ENCODE measurements at regions of chr14 and their contacts with region 1.

Region 1: DNA sequence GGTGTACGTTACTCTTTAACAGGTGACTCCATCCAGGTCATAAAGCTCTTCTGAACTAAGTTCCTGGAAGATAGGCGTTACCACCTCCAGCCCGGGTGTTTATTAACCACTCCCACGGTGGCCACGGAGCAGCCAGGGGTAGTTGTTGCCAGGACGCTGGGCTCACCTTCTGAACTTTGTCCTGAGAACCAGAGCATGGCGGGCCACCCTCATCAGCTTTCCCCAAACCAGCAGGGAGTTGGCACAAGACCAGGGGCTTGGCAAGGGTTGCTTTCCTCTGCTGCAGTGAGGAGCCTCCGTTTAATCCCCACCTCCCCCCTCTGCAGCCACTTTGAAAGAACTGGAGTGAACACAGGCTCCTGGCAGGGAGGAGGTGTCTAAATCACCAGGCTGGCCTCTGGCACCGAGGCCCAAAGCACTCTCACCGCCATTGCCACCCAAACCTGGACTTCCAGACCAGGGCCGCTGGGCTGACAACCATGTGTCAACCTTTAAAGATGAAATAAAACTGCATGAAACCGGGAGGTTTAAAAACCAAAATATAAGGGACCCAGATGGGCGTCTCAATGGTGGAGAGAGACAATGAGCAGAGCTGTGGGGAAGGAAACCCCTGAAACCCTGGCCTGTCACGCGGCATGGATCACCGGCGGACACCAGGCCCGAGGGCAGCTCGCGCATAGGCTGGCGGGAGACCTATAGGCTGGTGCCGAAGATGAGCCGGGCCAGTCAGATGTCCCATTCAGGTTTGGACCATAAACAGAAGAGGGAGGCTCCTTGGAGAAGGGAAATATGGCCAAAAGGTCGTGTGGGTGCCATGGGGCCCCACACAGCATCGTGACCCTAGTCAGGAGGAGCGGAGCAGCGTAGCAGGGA is 30.9 kb upstream of the TDRD9 start:
- DNase-seq: no peak
- ATAC-seq: no peak
- H3K4me3 ChIP-seq: no peak overlapping the region
- H3K27ac ChIP-seq: peak overlapping the region; percentile 14 to 15; a peak in 1 of 6 replicates
- H3K4me1 ChIP-seq: peaks cover 12% of the 10 kb centered on the region; the same call in 1 of the 3 replicates
- CTCF ChIP-seq: no peak
- EP300 ChIP-seq: no peak
- POLR2A ChIP-seq: no peak
- RAD21 ChIP-seq: no peak

Region 2: GRCh38 chr14:103801459-103801858 is 95.9 kb before region 1 on chr14:
- CTCF ChIA-PET with region 1: interaction called, 15 read pairs
- POLR2A ChIA-PET with region 1: no interaction called
- DNase-seq: no peak
- ATAC-seq: no peak
- H3K4me3 ChIP-seq: no peak overlapping the region
- H3K27ac ChIP-seq: no peak overlapping the region
- H3K4me1 ChIP-seq: no peaks in the 10 kb centered on the region
- CTCF ChIP-seq: no peak
- EP300 ChIP-seq: no peak
- POLR2A ChIP-seq: no peak
- RAD21 ChIP-seq: no peak

Region 3: GRCh38 chr14:103880348-103881267 is 16.7 kb before region 1 on chr14:
- CTCF ChIA-PET with region 1: interaction called, 122 read pairs
- POLR2A ChIA-PET with region 1: no interaction called
- DNase-seq: peak in 1 of 2 experiments; percentile 54
- ATAC-seq: peak; percentile 60 to 69
- H3K4me3 ChIP-seq: peak overlapping the region; percentile 35
- H3K27ac ChIP-seq: peak overlapping the region; percentile 86 to 94
- H3K4me1 ChIP-seq: peaks cover 21% of the 10 kb centered on the region
- CTCF ChIP-seq: no peak
- EP300 ChIP-seq: no peak
- POLR2A ChIP-seq: no peak
- RAD21 ChIP-seq: no peak

Region 4: DNA sequence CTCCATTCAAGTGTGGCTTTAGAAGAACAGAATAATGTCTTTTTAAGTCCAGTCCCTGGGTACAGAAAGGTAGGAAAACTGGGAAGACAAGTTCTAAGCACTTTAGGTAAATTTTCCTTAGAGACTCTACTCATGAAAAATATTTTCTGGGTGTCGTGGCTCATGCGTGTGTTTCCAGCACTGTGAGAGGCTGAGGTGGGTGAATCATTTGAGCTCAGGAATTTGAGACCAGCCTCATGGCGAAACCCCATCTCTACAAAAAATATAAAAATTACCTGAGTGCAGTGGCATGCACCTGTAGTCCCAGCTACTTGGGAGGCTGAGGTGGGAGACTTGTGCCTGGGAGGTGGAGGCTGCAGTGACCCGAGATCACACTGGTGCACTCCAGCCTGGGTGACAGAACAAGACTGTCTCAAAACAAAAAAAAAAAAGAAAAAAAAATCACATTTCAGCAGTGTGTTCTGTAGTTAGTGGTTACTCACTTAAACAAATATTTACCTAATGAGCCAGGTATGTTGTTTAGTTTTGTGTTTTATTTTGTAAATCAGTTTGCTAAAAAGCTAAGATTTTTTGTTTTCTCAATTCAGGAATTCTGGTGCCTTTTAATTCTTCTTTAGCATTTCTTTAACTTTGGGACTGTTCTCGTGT is 97.3 kb after region 1 on chr14:
- CTCF ChIA-PET with region 1: interaction called, 11 read pairs
- POLR2A ChIA-PET with region 1: no interaction called
- DNase-seq: no peak
- ATAC-seq: peak in 1 of 2 experiments; percentile 41; a peak in 2 of 6 replicates
- H3K4me3 ChIP-seq: no peak overlapping the region
- H3K27ac ChIP-seq: no peak overlapping the region
- H3K4me1 ChIP-seq: peaks cover 10% of the 10 kb centered on the region; the same call in 2 of the 3 replicates
- CTCF ChIP-seq: no peak
- EP300 ChIP-seq: no peak
- POLR2A ChIP-seq: no peak
- RAD21 ChIP-seq: no peak